Mucosa of descending colon (tissue), 3 donors: ENCODE measurements at regions of chr17 and their contacts with region 1.

Region 1: DNA sequence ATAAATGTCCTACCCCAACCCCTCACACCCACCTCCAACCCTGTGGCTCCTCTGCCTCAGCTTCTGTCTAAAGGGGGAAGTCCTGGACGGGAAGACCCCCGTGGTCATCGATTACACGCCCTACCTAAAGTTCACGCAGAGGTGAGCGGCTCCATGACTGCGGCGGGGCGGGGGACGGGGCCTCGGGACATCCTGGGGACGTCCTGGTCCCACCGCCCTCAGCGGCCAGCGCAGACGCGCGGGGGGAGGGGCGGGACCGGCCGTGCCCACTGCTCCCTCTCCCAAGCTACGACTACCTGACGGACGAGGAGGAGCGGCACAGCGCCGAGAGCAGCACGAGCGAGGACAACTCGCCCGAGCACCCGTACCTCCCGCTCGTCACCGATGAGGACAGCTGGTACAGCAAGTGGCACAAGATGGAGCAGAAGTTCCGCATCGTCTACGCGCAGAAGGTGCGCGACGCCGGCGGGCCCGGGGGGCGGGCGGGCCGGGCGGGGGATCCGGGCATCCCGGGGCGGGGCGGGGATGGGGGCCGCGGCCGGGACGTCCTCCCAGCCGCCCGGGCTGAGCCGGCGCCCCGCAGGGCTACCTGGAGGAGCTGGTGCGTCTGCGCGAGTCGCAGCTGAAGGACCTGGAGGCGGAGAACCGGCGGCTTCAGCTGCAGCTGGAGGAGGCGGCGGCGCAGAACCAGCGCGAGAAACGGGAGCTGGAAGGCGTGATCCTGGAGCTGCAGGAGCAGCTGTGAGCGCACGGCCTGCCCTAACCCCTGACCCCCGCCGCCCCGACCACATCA is 6.7 kb downstream of the RUNDC3A start:
- DNase-seq: no peak
- ATAC-seq: peak; percentile 29
- H3K4me3 ChIP-seq: no peak overlapping the region
- H3K4me1 ChIP-seq: no peaks in the 10 kb centered on the region
- CTCF ChIP-seq: no peak

Region 2: DNA sequence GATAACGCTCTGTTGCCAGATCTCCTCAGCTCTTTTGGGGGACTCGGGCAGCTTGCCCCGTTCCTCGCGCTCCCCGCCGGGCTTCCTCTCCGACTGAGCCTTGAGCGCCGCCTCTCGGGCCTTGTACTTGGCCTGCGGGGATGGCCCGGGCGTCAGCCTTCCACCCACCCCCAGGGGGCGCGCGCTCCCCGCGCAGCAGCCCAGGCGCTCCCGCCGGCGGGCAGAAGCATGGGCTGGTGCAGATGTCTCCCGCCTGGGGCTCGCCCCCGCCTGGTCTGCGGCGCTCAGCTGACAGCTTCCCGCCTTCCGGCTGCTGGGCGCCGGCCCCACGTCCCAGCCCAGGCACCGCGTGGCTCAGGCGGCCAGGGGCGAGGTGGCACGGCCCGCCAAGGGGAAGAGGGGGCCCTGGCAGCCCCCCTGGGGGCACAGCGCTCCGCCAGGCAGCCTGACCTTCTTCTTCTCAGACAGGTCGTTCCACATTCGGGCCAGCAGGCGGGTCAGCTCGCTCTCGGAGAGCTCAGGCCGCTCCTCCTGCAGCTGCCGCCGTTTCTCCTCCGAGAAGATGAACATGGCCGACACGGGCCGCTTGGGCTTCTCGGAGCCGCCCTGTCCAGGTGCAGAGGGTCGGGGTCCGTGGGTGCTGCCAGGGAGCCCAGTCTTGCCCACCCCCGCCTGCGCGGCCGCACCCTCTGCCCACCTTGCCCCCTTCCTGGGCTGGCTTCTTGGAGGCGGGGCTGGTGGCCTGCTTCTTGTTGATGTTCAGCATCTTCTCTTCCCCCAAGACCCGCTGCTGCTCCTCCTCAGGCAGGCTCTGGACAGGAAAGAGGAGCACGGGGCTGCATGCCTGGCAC is 104.5 kb before region 1 on chr17:
- intact Hi-C with region 1: loop called in 1 of 2 experiments (anchors 5 kb)
- DNase-seq: peak; percentile 91 to 93 (median 92)
- ATAC-seq: peak; percentile 97
- H3K4me3 ChIP-seq: no peak overlapping the region
- H3K4me1 ChIP-seq: peaks cover 13% of the 10 kb centered on the region
- CTCF ChIP-seq: peak; percentile 99